Activated B cell treated with CpG ODN at 0.5 μM for 24 hours (primary cell): ENCODE measurements at regions of chr2 and their contacts with region 1.

Region 1: GRCh38 chr2:163345908-163346573 is 389.8 kb downstream of the FIGN start:
- DNase-seq: no peak
- ATAC-seq: peak; percentile 49
- H3K4me3 Mint-ChIP-seq: no peak overlapping the region
- H3K27ac Mint-ChIP-seq: no peak overlapping the region
- H3K4me1 Mint-ChIP-seq: peaks cover 14% of the 10 kb centered on the region
- H3K27me3 Mint-ChIP-seq: no peaks in the 10 kb centered on the region
- CTCF ChIP-seq: peak; percentile 47

Region 2: DNA sequence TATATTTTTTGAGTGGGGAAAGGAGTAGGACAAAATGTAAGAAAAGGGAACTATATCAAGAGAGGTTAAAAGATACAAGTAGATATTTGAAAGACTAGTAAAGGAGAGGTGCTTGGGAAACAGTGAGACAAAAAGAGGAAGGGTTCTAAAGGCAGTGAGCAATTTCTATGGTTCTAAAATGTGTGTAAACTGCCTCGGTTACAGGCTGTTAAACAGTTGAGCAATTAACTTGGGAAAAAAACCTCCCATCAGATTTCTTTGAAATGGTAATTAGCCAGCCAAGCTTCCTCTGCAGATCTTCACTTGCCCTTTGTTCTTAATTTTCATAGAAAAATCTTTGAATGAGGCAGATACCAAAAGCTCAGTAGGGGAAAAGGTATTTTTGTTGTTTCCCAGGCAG is 268.8 kb before region 1 on chr2:
- CTCF ChIA-PET with region 1: no interaction called
- POLR2A ChIA-PET with region 1: no interaction called
- intact Hi-C with region 1: no loop called
- DNase-seq: no peak
- ATAC-seq: no peak
- H3K4me3 Mint-ChIP-seq: no peak overlapping the region
- H3K27ac Mint-ChIP-seq: no peak overlapping the region
- H3K4me1 Mint-ChIP-seq: no peaks in the 10 kb centered on the region
- H3K27me3 Mint-ChIP-seq: no peaks in the 10 kb centered on the region
- CTCF ChIP-seq: no peak

Region 3: DNA sequence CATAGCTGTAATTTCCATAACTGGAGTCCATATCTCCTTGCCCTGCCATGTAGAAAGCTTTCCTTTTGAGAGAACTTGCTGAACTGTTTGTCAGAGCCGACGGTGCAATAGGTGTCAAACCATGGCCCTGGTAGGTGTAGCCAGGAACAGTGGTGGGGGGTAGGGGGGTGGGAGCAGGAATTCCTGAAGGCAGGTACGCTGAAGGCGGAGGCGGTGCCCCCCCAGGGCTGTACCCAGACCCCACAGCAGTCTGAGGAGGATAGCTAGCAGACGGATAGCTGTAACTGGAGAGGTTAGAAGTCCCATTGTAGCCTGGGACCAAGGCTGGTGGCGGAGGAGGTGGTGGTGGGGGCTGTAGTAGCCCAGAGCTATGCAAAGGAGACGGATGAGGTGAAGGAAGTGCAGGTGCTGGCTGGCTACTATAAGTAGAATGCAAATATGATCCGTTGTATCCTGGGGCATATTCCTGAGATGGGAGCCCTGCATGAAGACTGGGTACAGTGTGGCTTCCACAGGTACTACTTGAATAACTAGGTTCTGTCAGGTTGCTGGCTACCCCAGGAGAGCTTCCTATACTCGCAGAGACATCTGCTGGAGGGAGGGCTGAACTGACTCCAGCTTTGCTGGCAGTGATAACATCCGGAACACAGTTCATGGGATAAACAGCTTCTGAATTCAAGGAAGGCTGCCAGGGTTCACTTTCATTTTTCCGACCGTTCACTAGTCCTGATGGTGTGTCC is 264.9 kb after region 1 on chr2:
- CTCF ChIA-PET with region 1: no interaction called
- POLR2A ChIA-PET with region 1: no interaction called
- intact Hi-C with region 1: loop called (anchors 1 kb)
- DNase-seq: no peak
- ATAC-seq: no peak
- H3K4me3 Mint-ChIP-seq: no peak overlapping the region
- H3K27ac Mint-ChIP-seq: no peak overlapping the region
- H3K4me1 Mint-ChIP-seq: no peaks in the 10 kb centered on the region
- H3K27me3 Mint-ChIP-seq: no peaks in the 10 kb centered on the region
- CTCF ChIP-seq: no peak

Region 4: DNA sequence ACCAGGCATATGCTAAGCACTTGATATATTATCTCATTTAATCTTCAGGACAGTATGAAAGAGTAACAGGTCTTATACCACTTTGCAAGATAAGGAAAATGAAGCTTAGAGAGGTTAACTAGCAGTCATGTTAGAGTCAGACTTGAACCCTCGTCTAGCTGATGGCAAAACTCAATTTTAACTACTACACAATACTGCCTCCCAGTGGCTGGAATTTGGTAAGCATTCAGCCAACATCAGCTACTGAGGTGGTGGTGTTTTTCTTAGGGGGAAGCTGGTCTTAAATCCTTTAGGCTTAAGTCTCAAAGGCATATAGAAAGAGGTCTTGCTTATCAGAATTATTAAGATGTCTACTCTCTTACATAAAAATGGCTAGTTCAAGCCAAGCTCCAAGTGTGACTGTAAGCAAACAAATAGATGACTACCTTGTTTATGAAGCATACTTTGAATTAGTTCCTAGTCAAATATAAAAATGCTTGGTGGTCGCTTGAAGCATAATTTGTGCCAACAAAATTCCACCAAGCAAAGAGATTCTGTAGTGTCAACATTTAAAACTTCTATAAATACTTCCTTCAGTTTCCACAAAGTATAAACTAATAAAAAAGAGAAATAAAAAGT is 715.2 kb after region 1 on chr2:
- CTCF ChIA-PET with region 1: interaction called, 9 read pairs
- POLR2A ChIA-PET with region 1: no interaction called
- intact Hi-C with region 1: loop called (anchors 1 kb)
- DNase-seq: no peak
- ATAC-seq: no peak
- H3K4me3 Mint-ChIP-seq: no peak overlapping the region
- H3K27ac Mint-ChIP-seq: no peak overlapping the region
- H3K4me1 Mint-ChIP-seq: no peaks in the 10 kb centered on the region
- H3K27me3 Mint-ChIP-seq: no peaks in the 10 kb centered on the region
- CTCF ChIP-seq: no peak

Region 5: DNA sequence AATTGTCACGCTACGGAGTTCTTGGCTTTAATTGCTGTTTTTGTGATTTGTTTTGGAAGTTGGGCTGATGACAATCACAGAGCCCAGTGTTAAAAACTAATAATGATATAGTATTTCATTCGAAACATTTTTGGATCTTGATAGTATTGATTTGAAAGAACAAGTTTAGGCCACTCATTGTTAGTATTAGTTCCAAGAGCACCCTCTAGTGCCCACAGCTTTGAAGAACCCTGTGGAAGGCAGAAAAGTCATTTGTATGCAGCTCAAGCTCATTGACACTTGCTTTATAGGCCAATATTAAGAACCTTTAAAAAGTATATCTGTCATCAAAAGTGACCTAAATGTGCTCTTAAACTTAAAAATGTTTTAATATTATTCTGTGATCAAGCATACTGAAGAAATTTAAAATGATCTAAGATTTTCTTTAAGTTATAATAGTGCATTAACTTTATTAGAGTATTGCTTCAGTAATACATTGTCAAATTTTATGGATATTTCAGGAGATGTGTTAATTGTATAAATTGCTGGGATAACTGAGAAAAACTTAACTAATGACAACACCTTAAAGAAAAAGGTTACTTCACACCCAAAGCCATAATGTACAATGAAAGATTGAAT is 1084.2 kb after region 1 on chr2:
- CTCF ChIA-PET with region 1: no interaction called
- POLR2A ChIA-PET with region 1: no interaction called
- intact Hi-C with region 1: loop called (anchors 1 kb)
- DNase-seq: no peak
- ATAC-seq: no peak
- H3K4me3 Mint-ChIP-seq: no peak overlapping the region
- H3K27ac Mint-ChIP-seq: no peak overlapping the region
- H3K4me1 Mint-ChIP-seq: no peaks in the 10 kb centered on the region
- H3K27me3 Mint-ChIP-seq: no peaks in the 10 kb centered on the region
- CTCF ChIP-seq: no peak

Region 6: GRCh38 chr2:164479460-164479859 is 1133.4 kb after region 1 on chr2:
- CTCF ChIA-PET with region 1: no interaction called
- POLR2A ChIA-PET with region 1: no interaction called
- intact Hi-C with region 1: loop called (anchors 5 kb)
- DNase-seq: no peak
- ATAC-seq: no peak
- H3K4me3 Mint-ChIP-seq: no peak overlapping the region
- H3K27ac Mint-ChIP-seq: no peak overlapping the region
- H3K4me1 Mint-ChIP-seq: no peaks in the 10 kb centered on the region
- H3K27me3 Mint-ChIP-seq: no peaks in the 10 kb centered on the region
- CTCF ChIP-seq: no peak

Region 7: DNA sequence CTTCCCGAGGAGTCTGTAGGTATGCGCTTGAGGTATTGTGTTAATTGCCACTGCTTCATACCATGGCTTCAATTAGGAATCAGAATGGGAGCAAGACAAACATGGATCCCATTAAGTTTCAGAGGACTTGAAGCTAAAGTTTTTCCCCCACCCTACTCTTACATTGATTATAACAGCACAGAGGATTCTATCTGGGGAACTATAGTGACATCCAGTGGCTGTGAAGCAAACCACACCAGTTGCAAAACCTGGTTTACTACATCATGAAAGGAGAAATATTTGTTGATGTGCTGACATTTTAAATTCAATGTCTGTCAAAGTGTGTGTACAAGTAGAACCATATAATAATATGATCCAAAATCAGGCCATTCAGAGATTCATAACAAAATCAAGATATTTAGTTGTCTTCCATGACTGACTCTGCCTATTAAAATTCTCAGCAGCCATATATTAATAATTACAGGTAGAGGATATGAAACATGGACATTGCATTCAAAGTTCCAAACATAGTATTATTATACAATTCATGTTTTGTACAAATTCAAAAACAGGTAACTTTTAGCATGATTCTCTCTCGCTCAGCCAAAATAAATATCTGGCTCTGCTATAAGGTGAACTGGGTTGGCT is 1192.3 kb after region 1 on chr2:
- CTCF ChIA-PET with region 1: no interaction called
- POLR2A ChIA-PET with region 1: no interaction called
- intact Hi-C with region 1: loop called (anchors 1 kb)
- DNase-seq: no peak
- ATAC-seq: no peak
- H3K4me3 Mint-ChIP-seq: no peak overlapping the region
- H3K27ac Mint-ChIP-seq: no peak overlapping the region
- H3K4me1 Mint-ChIP-seq: no peaks in the 10 kb centered on the region
- H3K27me3 Mint-ChIP-seq: peaks cover 2% of the 10 kb centered on the region
- CTCF ChIP-seq: no peak